Activated CD4-positive, alpha-beta memory T cell treated with anti-CD3 and anti-CD28 coated beads for 36 hours (primary cell): ENCODE measurements at regions of chr3 and their contacts with region 1.

Region 1: DNA sequence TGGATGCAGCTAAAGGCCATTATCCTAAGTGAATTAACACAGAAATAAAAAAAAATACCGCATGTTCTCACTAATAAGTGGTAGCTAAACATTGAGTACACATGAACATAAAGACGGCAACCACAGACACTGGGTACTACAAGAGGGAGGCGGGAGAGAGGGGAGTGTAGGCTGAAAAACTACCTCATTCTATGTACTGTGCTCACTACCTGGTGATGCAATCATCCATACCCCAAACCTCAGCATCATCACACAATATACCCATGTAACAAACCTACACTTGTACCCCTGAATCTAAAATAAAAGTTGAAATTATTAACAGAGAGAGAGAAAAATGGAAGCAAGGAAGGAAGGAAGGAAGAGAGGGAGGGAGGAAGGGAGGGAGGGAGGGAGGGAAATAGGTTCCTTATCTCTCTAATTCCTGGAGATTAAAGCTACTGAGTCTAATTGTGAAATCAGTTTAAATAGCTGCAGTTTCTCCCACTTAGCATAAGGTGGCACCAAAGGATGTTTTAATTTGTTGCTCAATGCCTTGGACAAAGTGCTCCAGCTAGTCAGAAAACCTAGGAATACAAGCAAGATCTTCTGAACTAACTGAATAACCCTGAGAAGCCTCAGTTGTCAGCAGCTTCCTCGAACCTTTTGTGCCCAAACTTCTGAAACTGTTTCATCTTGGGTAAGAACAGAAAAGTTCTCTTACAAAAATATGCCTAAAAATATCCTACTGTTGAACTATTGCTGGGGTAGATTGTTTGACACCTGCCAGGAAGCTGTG is 79.4 kb upstream of the ATP11B start:
- DNase-seq: no peak
- H3K4me3 Mint-ChIP-seq: no peak overlapping the region
- H3K27ac Mint-ChIP-seq: no peak overlapping the region
- H3K4me1 Mint-ChIP-seq: peaks cover 5% of the 10 kb centered on the region
- H3K27me3 Mint-ChIP-seq: no peaks in the 10 kb centered on the region

Region 2: GRCh38 chr3:182567700-182568099 is 146.2 kb before region 1 on chr3:
- CTCF ChIA-PET with region 1: no interaction called
- POLR2A ChIA-PET with region 1: no interaction called
- intact Hi-C with region 1: no loop called
- DNase-seq: no peak
- H3K4me3 Mint-ChIP-seq: no peak overlapping the region
- H3K27ac Mint-ChIP-seq: no peak overlapping the region
- H3K4me1 Mint-ChIP-seq: no peaks in the 10 kb centered on the region
- H3K27me3 Mint-ChIP-seq: peaks cover 6% of the 10 kb centered on the region

Region 3: DNA sequence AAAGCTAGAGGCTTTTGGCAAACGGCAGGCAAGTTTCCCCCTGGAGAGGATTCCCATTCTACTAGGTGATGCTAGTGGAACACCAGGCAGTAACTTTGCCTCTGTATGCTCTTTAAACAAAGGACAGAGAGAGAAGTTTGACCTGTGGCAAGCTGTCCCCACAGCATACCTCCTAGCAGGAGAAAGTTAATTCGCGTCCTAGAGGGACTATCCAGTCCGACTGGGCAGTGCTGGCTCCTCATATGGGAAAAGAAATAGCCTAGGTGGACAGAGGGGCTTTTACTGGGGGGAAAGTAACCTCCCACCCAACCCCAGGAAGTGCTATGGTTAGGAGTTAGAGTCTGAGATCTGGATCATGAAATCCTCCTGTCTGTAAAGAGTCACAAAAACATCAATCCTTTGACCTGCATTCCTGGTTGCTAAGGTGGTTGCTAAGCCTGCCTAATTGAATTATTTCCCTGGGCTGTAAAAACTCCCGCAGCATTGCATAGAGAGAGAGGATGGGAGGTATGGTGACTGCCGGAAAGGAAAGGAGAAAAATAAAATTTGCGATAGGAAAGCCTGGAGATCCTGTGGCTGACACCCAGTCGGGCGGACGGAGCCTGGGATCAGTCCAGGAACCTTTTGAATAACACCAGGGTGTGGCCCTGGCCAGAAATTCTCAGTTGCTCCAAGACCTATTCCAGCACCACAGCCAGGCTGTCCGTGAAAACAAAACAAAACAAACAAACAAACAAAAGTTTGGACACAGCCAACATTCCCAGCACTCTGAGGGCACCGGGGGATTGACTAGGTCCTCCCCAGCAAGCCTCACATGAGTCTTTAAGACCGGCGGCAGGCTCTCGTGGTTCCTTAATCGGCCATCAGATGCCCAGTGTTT is 11.7 kb after region 1 on chr3:
- CTCF ChIA-PET with region 1: interaction called, 42 read pairs
- POLR2A ChIA-PET with region 1: no interaction called
- intact Hi-C with region 1: no loop called
- DNase-seq: no peak
- H3K4me3 Mint-ChIP-seq: no peak overlapping the region
- H3K27ac Mint-ChIP-seq: no peak overlapping the region
- H3K4me1 Mint-ChIP-seq: peaks cover 8% of the 10 kb centered on the region
- H3K27me3 Mint-ChIP-seq: peaks cover 11% of the 10 kb centered on the region

Region 4: GRCh38 chr3:182792901-182793662 is 79.2 kb after region 1 on chr3 and contains the start of gene ATP11B:
- CTCF ChIA-PET with region 1: interaction called, 9 read pairs
- POLR2A ChIA-PET with region 1: no interaction called
- intact Hi-C with region 1: loop called (anchors 5 kb)
- DNase-seq: peak; percentile 82
- H3K4me3 Mint-ChIP-seq: peak within 1 kb of the TSS; percentile 93
- H3K27ac Mint-ChIP-seq: peak within 1 kb of the TSS; percentile 94
- H3K4me1 Mint-ChIP-seq: peaks cover 24% of the 10 kb centered on the region
- H3K27me3 Mint-ChIP-seq: peaks cover 2% of the 10 kb centered on the region
- total RNA-seq, gene ATP11B: 93.9 to 96.0 TPM

Region 5: DNA sequence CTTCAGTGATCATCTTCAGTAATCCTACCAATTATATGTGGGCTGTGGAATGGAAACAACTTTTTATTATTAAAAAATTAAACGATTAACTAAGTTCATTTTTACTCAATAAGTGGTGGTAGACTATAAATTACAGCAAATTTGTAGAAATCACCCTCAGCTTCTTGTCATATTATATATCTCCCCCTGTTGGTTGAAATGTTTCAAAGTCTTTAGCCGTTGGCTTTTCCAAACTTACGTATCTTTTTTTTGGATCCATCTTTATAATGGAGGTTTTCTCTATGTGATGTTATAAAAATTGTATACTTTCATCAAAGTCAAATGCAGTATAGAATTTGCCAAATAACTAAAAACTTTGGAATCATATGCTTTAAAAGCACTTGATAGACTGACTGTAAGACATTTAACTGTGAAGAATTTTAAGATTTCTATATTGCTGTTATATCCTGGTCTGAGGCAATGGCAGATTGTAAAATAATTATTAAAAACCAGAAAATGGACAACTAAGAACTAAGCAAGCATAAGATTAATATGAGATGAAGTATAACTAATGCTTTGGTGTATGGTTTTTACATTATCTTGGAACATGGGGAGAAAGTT is 124.0 kb after region 1 on chr3:
- CTCF ChIA-PET with region 1: interaction called, 28 read pairs
- POLR2A ChIA-PET with region 1: no interaction called
- intact Hi-C with region 1: loop called (anchors 1 kb)
- DNase-seq: no peak
- H3K4me3 Mint-ChIP-seq: no peak overlapping the region
- H3K27ac Mint-ChIP-seq: no peak overlapping the region
- H3K4me1 Mint-ChIP-seq: no peaks in the 10 kb centered on the region
- H3K27me3 Mint-ChIP-seq: no peaks in the 10 kb centered on the region

Region 6: DNA sequence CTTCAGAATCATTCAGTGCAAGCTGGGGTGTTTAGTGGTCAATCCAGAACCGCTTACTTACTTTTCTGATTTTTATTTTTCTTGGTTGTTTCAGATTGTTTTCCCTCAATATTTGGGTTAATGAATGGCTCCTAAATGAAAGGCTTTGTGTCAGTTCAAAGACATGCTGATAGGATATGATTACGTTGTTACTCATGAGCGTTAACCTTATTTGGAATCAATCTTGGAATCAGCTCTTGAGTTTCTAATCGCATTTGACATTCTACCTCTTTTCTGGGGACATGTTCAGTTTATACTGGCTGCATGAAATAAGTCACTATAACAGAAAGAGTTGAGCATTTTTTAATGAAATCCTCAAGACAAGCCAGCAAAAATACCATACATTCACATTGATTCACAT is 129.5 kb after region 1 on chr3:
- CTCF ChIA-PET with region 1: interaction called, 14 read pairs
- POLR2A ChIA-PET with region 1: no interaction called
- intact Hi-C with region 1: loop called (anchors 1 kb)
- DNase-seq: no peak
- H3K4me3 Mint-ChIP-seq: no peak overlapping the region
- H3K27ac Mint-ChIP-seq: no peak overlapping the region
- H3K4me1 Mint-ChIP-seq: no peaks in the 10 kb centered on the region
- H3K27me3 Mint-ChIP-seq: no peaks in the 10 kb centered on the region

Region 7: DNA sequence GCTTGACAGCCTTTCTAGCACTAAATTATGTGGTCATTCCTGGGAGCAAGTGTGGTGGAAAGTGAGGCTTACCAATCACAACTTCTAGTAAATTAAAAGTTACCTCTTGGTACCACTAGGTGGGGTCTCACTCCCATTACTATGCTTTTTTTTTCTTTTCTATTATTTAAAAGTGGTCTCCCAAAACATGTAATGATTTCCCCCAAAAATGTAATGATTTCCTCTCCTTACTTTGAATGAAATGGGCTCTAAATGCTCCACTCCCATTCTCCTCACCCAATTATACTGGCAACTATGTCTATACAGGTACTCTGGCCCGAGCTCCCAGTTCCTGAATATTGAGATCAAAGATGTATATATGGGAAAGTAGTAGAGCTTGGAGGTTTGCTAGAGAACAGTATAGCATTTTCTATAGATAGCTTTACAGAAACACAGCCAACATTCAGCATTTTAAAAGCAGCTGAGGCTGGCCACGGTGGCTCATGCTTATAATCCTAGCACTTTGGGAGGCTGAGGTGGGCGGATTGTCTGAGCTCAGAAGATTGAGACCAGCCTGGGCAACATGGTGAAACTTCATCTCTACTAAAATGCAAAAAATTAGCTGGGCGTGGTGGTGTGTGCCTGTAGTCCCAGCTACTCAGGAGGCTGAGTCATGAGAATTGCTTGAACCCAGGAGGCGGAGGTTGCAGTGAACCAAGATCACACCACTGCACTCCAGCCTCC is 195.5 kb after region 1 on chr3:
- CTCF ChIA-PET with region 1: interaction called, 5 read pairs
- POLR2A ChIA-PET with region 1: no interaction called
- intact Hi-C with region 1: loop called (anchors 5 kb)
- DNase-seq: peak; percentile 16
- H3K4me3 Mint-ChIP-seq: no peak overlapping the region
- H3K27ac Mint-ChIP-seq: no peak overlapping the region
- H3K4me1 Mint-ChIP-seq: peaks cover 44% of the 10 kb centered on the region
- H3K27me3 Mint-ChIP-seq: no peaks in the 10 kb centered on the region

Region 8: GRCh38 chr3:183018421-183019192 is 304.7 kb after region 1 on chr3:
- CTCF ChIA-PET with region 1: interaction called, 3 read pairs
- POLR2A ChIA-PET with region 1: no interaction called
- intact Hi-C with region 1: loop called (anchors 10 kb)
- DNase-seq: no peak
- H3K4me3 Mint-ChIP-seq: no peak overlapping the region
- H3K27ac Mint-ChIP-seq: no peak overlapping the region
- H3K4me1 Mint-ChIP-seq: no peaks in the 10 kb centered on the region
- H3K27me3 Mint-ChIP-seq: no peaks in the 10 kb centered on the region

Region 9: GRCh38 chr3:183328823-183329222 is 614.9 kb after region 1 on chr3:
- CTCF ChIA-PET with region 1: no interaction called
- POLR2A ChIA-PET with region 1: no interaction called
- intact Hi-C with region 1: no loop called
- DNase-seq: no peak
- H3K4me3 Mint-ChIP-seq: no peak overlapping the region
- H3K27ac Mint-ChIP-seq: no peak overlapping the region
- H3K4me1 Mint-ChIP-seq: peaks cover 10% of the 10 kb centered on the region
- H3K27me3 Mint-ChIP-seq: no peaks in the 10 kb centered on the region